AG04449 (cell line): ENCODE measurements at regions of chr17 and their contacts with region 1.

Region 1: DNA sequence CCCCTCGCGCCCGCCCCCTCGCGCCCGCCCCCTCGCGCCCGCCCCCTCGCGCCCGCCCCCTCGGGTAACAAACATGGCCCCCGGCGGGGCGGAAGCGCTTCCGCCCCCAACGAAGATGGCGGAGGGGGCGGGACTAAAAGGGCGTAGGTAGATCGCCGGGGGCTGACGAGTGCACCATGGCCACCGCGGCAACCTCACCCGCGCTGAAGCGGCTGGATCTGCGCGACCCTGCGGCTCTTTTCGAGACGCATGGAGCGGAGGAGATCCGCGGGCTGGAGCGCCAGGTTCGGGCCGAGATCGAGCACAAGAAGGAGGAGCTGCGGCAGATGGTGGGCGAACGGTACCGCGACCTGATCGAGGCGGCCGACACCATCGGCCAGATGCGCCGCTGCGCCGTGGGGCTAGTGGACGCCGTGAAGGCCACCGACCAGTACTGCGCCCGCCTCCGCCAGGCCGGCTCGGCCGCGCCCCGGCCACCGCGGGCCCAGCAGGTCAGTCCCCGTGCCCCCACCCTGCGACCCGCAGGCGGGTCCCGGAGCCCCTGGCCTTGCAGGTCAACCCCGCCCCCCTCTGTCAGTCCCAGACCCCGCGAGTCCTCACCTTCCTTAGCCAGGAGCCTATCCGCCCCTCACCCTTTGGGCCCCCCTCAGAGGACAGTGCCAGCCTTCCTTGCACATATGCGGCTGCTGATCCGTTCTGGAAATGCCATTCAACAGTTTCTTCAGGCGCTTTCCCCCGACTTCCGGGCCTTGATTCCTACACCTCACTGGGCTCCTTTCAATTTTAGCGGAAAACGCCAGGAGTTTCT is at the start of gene COG1:
- DNase-seq: no peak
- H3K4me3 ChIP-seq: peak within 1 kb of the TSS; percentile 93
- CTCF ChIP-seq: no peak

Region 2: DNA sequence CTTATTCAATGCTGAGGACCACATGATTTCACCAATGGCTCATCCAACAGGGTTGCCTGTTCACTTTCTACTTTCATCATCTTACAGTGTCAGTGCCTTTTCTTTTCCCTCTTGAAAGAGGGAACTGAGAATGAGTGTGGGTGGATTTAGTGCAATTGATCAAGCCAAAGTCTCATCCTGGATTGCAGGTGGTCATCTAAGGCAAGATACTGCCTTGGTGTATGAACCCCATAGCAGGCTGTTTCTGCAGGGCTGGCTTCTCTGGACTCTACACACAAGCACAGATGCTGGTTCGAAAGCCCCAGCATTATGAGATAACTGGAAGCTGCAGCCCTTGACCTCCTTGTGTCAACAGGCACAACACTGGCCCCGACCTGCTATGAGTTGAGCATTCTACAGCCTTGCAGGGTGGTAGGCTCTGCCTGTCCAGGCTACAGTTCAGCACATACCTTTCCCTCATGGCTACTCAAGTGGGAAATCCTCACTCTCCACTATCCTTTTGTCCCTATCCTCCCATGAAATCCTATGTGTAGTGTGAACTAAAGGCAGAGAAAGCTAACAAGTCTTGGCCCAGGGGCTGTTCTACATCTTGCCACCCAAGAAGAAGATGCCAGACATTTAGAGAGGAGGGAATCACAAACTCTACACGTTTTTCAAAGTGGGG is 459.3 kb before region 1 on chr17:
- CTCF ChIA-PET with region 1: interaction called, 551 read pairs
- POLR2A ChIA-PET with region 1: interaction called, 3 read pairs
- DNase-seq: no peak
- H3K4me3 ChIP-seq: no peak overlapping the region
- CTCF ChIP-seq: no peak

Region 3: GRCh38 chr17:73142872-73143381 is 50.2 kb before region 1 on chr17:
- CTCF ChIA-PET with region 1: no interaction called
- POLR2A ChIA-PET with region 1: no interaction called
- DNase-seq: no peak
- H3K4me3 ChIP-seq: no peak overlapping the region
- CTCF ChIP-seq: no peak

Region 4: DNA sequence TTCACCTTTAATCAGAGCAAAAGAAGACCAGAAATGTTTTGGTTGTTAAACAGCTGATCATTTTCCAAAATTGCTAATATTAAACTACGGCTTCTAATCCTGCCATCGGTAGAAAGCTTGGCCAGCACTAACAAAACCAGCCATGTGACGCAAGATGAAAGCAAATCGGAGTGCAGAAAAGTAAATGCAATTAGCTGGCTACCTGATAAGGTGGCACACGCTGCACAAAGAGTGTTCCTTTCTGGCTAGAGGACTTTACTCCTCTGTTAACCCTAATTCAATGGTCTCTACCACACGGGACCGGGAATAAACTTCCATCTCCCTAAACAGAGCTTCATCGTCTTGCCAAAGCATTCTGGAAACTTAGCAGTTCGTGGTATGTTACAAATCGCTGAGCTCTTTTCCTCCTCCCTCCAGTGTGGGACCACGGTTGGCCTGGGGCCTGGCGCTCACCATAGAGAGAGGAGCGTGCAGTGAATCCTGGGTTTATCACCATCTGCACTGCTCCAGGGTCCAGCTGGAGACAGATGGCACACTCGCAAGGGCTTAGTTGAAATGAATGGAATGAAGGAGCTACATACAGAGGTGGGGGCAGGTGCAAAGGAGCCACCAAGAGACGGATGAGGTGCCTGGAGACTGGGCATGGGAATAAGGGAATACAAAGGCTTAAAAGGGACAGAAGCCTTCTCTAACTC is 10.3 kb before region 1 on chr17:
- CTCF ChIA-PET with region 1: interaction called, 67 read pairs
- POLR2A ChIA-PET with region 1: no interaction called
- DNase-seq: no peak
- H3K4me3 ChIP-seq: no peak overlapping the region
- CTCF ChIP-seq: no peak

Region 5: DNA sequence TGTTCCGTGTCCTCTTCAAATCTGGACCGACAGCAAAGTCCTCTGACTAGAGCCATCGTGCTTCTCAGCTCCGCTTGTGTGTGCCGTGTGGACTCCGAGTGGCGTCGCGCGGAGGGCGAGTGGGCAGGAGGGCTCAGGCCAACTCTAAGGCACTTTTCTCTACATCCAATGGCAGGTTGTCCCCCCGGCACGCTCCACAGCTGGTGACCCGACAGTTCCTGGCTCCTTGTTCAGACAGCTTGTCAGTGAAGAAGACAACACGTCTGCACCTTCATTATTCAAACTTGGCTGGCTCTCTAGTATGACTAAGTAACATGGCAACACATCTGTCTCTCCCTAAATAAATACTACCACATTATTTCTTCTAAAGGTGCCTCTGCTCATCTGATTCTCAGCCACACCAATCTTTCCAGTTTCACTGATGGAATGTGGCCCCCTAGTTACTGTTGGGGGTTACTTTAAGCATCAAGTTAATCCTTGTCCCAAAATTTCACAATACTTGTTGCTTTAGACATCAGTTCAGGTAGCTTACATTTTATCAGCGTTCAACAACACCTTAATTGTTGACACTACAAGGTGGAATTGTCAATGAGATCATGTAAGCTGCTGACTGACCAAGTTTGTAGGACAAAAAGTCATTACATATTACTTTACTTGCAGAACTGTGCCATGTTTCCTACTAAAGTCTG is 15.2 kb after region 1 on chr17:
- CTCF ChIA-PET with region 1: interaction called, 27 read pairs
- POLR2A ChIA-PET with region 1: no interaction called
- DNase-seq: no peak
- H3K4me3 ChIP-seq: no peak overlapping the region
- CTCF ChIP-seq: no peak

Region 6: GRCh38 chr17:73231841-73232586 is 38.9 kb after region 1 on chr17:
- CTCF ChIA-PET with region 1: interaction called, 86 read pairs
- POLR2A ChIA-PET with region 1: no interaction called
- DNase-seq: peak; percentile 51
- H3K4me3 ChIP-seq: peak overlapping the region; percentile 93
- CTCF ChIP-seq: no peak

Region 7: DNA sequence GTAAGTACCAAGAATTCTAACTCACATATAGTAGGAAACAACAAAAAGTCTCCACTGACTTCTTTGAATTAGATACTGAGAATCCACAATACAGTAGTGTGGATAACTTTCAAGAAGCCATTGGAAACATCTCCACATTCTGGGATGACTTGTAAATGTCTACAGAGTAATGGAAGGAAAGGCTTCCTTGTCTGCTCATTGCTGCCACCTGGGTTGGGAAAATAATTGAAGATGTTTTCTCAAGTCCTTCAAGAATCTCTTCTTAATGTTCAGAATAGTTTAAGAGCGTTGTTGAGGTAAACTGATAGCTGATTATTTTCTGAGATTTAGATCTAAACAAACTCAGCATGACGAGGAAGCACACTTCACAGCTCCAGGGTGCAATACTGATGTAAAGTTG is 54.6 kb after region 1 on chr17:
- CTCF ChIA-PET with region 1: interaction called, 19 read pairs
- POLR2A ChIA-PET with region 1: no interaction called
- DNase-seq: no peak
- H3K4me3 ChIP-seq: no peak overlapping the region
- CTCF ChIP-seq: peak; percentile 12

Region 8: GRCh38 chr17:73278465-73279453 is 85.7 kb after region 1 on chr17:
- CTCF ChIA-PET with region 1: no interaction called
- POLR2A ChIA-PET with region 1: no interaction called
- DNase-seq: no peak
- H3K4me3 ChIP-seq: no peak overlapping the region
- CTCF ChIP-seq: no peak